ENCODE measurements at regions of chr12 and their contacts with region 1.

Region 1: DNA sequence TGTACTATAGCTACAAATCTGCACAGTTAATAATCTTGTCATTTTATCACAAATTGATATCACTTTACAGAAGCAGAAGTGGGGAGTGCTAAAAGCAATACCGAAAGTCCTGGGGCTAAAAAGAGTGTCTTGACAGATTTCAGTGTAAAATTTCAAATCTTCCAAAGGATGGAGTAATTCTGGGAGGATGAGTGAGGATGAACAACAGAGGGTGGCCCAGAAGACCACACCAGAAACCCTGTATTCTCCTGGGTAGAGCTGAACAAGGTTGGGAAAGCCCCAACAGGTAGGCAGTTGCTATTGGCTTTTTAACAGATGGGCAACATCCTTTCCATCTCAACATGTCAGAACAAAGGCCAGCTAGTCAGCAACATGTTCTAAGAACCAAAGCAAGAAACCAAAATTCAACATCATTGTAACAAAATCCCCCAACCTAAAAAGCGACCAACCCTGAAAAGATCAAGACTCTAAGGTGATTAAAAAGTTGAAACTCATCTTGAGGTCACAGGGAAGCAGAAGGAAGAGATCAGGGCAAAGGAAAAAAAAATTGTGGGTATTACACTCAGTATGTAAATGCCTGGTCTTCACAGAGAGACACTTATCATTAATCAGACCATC is 38.8 kb downstream of the CBX5 start:
- DNase-seq: no peak
- H3K4me3 ChIP-seq: no peak overlapping the region
- H3K27ac ChIP-seq: no peak overlapping the region
- H3K4me1 ChIP-seq: no peaks in the 10 kb centered on the region
- H3K27me3 ChIP-seq: no peaks in the 10 kb centered on the region
- CTCF ChIP-seq: no peak
- EP300 ChIP-seq: no peak
- RAD21 ChIP-seq: no peak

Region 2: DNA sequence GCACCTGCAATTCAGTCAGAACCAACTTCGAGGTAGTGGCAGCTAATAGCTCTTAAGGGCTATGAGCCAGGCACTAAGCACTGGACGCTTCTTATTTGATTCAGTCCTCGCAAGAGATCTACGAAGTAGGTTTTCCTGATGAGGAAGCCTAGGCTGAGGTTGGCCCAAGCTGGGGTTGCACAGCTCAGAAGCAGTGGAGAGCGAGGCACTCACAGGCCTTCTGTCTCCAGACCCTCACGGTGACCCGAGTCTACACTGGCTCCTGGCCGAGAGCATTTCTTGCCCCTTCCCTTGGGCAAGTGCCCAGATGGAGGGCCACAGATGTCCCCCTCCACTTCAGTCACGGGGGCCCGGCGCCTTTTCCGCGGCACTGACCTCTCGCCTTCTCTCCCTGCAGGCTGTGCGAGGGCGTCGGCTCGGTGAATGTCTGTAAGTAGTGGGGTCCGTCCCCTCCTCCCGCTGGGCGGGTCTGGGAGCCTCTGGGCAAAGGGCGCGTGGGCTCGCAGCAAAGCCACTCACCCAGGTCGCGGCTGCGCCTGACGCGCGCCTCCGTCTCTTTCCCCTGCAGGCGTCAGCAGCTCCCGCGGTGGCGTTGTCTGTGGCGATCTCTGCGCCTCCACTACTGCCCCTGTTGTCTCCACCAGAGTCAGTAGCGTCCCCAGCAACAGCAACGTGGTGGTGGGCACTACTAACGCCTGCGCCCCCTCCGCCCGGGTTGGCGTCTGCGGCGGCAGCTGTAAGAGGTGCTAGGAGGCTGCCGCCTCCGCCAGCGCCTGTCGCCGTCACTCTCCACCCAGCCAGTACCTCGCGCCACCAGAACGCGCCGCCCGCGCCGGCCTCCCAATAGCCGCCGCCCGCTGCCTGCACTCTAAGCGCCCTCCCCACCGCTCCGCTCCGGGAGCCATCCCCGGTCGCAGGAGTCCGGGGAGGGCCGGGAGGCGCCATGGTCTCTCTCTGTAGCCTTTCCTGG is 1933.0 kb before region 1 on chr12:
- CTCF ChIA-PET with region 1: no interaction called
- POLR2A ChIA-PET with region 1: no interaction called
- DNase-seq: peak; percentile 89
- H3K4me3 ChIP-seq: peak overlapping the region; percentile 29 to 39; a peak in 3 of 4 replicates
- H3K27ac ChIP-seq: no peak overlapping the region
- H3K4me1 ChIP-seq: peaks cover 0 to 9% of the 10 kb centered on the region in 2 experiments; a peak in 1 of 4 replicates
- H3K27me3 ChIP-seq: no peaks in the 10 kb centered on the region
- CTCF ChIP-seq: no peak
- EP300 ChIP-seq: no peak
- RAD21 ChIP-seq: no peak; the same call in 1 of the 2 replicates

Region 3: DNA sequence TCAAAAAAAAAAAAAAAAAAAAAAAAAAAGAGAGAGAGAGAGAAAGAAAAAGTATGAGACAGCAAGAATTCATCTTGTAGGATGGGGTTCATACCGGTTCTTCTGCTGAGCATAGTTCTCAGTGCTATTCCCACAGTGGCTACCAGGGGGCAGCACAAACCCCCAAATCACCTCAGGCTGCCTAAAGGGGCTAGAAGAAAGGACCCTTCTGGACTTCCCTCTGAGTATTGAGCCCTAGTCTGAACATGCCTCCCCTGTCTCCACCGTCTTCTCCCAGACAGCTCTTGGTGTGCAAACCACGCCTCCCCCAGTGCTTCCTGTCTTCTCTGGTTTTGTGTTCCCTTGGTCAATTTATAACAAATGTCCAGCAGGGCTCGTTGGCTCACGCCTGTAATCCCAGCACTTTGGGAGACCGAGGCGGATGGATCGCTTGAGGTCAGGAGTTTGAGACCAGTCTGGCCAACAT is 21.0 kb before region 1 on chr12:
- CTCF ChIA-PET with region 1: interaction called, 10 read pairs
- POLR2A ChIA-PET with region 1: no interaction called
- DNase-seq: peak; percentile 75
- H3K4me3 ChIP-seq: no peak overlapping the region; a peak in 1 of 4 replicates
- H3K27ac ChIP-seq: no peak overlapping the region
- H3K4me1 ChIP-seq: peaks cover 3 to 14% of the 10 kb centered on the region in 2 experiments; a peak in 3 of 4 replicates
- H3K27me3 ChIP-seq: no peaks in the 10 kb centered on the region
- CTCF ChIP-seq: peak; percentile 88
- EP300 ChIP-seq: no peak
- RAD21 ChIP-seq: peak; percentile 84

Measured in SK-N-SH (cell line).